ENCODE measurements at regions of chr15 and their contacts with region 1.

Region 1: GRCh38 chr15:79970624-79971434 is at the start of gene BCL2A1:
- DNase-seq: peak; percentile 82
- ATAC-seq: peak; percentile 74
- H3K4me3 Mint-ChIP-seq: peak within 1 kb of the TSS; percentile 96
- H3K27ac Mint-ChIP-seq: peak within 1 kb of the TSS; percentile 93
- H3K4me1 Mint-ChIP-seq: peaks cover 49% of the 10 kb centered on the region
- H3K27me3 Mint-ChIP-seq: no peaks in the 10 kb centered on the region
- CTCF ChIP-seq: no peak
- total RNA-seq, gene BCL2A1: 47.1 to 47.9 TPM

Region 2: DNA sequence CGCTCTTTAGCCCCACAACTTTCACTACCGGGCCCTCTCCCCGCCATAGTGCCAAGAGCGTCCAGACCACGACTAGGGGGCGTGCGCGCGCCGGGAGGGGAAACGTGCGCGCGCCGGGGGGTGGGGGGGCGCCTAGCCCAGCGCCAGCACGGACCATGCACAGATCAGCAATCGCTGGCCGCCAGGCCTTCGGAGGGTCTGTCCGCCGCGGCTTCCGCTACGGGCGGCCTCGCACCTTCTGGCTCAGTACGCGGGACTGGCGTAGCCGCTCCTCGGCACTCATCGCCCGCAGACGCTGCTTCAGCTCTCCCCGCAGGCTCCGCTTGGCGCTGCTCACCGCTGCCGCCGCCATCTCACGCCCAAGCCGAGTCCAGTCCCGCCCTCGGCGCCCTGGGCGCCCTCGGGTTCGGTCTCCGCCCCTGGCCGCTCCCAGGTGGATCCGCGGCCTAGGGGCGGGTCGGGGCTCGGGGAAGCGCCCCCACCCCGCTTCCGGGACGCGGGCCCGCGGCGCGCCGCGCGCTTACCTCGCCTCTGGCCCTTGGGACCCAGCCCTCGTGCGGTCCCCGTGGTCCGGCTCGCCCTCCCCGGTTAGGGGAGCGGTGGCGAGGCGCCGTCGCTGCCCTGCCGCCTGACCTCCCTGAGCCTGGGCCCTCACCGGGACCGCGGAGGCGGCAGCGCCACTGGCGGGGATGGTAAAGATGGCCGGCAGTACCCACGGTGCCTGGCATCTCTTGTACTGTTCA is 74.0 kb before region 1 on chr15 and contains the start of gene MTHFS:
- CTCF ChIA-PET with region 1: interaction called, 12 read pairs
- POLR2A ChIA-PET with region 1: interaction called, 38 read pairs
- intact Hi-C with region 1: loop called (anchors 2 kb)
- DNase-seq: peak; percentile 77
- ATAC-seq: peak; percentile 78
- H3K4me3 Mint-ChIP-seq: peak within 1 kb of the TSS; percentile 98
- H3K27ac Mint-ChIP-seq: peak within 1 kb of the TSS; percentile 100
- H3K4me1 Mint-ChIP-seq: peaks cover 47% of the 10 kb centered on the region
- H3K27me3 Mint-ChIP-seq: no peaks in the 10 kb centered on the region
- CTCF ChIP-seq: peak; percentile 20
- total RNA-seq, gene MTHFS: 27.3 to 28.4 TPM

Region 3: DNA sequence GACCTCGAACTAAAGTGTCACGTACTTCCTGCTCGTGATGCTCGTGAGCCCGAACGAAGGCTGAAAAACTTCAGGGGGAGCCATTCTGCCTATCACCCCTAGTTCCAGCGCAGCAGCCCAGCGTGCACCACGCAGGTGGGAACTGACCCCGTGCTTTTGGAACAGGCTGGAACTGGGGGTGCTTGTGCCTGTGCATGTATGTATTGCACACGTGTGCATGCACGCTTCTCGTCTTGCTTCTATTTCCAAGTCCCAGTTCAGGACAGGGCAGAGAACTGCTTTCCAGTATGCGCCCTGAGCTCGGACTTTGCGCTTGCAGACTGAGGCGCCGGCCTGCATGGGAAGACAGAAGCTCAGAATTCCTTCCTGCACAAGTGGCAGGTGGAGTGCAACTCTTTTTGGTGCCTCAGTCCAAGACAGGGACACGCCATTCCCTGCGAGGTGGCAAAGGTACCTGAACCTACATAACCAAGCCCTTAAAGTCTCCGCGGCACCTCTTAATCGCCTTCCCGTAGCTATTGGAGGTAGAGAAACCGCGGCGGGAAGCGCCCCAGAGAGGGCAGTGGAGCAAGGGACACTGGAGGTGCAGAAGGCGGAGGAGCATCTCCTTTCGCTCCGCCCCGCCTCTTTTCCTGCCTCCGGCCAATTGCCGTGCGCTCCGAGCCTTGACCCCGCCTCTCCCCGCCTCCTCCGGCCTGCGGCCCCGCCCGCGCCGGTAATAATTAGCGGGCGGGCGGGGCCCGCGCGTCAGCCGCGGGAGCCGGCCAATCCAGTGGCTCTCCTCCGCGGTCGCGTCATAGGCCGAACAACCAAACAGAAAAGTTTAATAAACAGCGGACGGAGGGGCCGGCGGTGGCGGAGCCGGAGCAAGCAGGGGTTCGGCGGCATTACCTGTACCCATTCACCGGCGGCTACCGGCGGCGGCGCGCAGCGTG is 88.3 kb after region 1 on chr15 and contains the start of gene ZFAND6:
- CTCF ChIA-PET with region 1: no interaction called
- POLR2A ChIA-PET with region 1: interaction called, 12 read pairs
- intact Hi-C with region 1: loop called (anchors 5 kb)
- DNase-seq: peak; percentile 96
- ATAC-seq: peak; percentile 91
- H3K4me3 Mint-ChIP-seq: peak within 1 kb of the TSS; percentile 91
- H3K27ac Mint-ChIP-seq: peak within 1 kb of the TSS; percentile 92
- H3K4me1 Mint-ChIP-seq: peaks cover 25% of the 10 kb centered on the region
- H3K27me3 Mint-ChIP-seq: no peaks in the 10 kb centered on the region
- CTCF ChIP-seq: no peak
- total RNA-seq, gene ZFAND6: 29.6 to 30.7 TPM

Region 4: GRCh38 chr15:80093854-80094418 is 123.1 kb after region 1 on chr15:
- CTCF ChIA-PET with region 1: no interaction called
- POLR2A ChIA-PET with region 1: no interaction called
- intact Hi-C with region 1: no loop called
- DNase-seq: peak; percentile 53
- ATAC-seq: peak; percentile 71
- H3K4me3 Mint-ChIP-seq: no peak overlapping the region
- H3K27ac Mint-ChIP-seq: peak overlapping the region; percentile 16
- H3K4me1 Mint-ChIP-seq: peaks cover 42% of the 10 kb centered on the region
- H3K27me3 Mint-ChIP-seq: no peaks in the 10 kb centered on the region
- CTCF ChIP-seq: no peak

Region 5: GRCh38 chr15:81312790-81313543 is 1342.1 kb after region 1 on chr15:
- CTCF ChIA-PET with region 1: no interaction called
- POLR2A ChIA-PET with region 1: no interaction called
- intact Hi-C with region 1: loop called (anchors 10 kb)
- DNase-seq: no peak
- ATAC-seq: no peak
- H3K4me3 Mint-ChIP-seq: no peak overlapping the region
- H3K27ac Mint-ChIP-seq: peak overlapping the region; percentile 69
- H3K4me1 Mint-ChIP-seq: peaks cover 72% of the 10 kb centered on the region
- H3K27me3 Mint-ChIP-seq: no peaks in the 10 kb centered on the region
- CTCF ChIP-seq: no peak

Measured in activated CD8-positive, alpha-beta T cell treated with anti-CD3 and anti-CD28 coated beads for 36 hours (primary cell).